GM10248 (cell line): ENCODE measurements at regions of chr15 and their contacts with region 1.

Region 1: DNA sequence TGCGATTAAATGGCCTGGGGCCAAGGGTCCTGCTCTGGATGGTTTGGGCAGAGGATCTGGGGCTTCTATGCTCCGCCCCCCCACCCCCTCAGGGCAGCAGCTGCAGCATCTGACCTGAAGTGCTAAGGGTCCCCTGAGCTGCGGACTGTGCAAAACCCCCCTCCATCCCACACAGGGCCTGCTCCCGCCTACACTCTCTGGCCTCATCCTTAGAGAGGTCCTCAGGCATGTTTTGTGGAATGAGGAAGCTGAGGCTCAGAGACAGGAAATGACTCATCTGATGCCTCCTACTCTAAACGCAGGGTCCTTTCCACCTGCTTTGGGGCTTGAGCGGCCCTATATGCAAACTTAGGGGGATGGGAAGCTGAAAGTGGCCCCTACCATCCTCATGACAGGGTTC is 59.5 kb upstream of the CTSH start:
- DNase-seq: peak; percentile 85
- CTCF ChIP-seq: no peak

Region 2: GRCh38 chr15:78909791-78910228 is 94.5 kb before region 1 on chr15:
- CTCF ChIA-PET with region 1: interaction called, 23 read pairs
- POLR2A ChIA-PET with region 1: interaction called, 3 read pairs
- DNase-seq: peak; percentile 51
- CTCF ChIP-seq: peak; percentile 64

Region 3: GRCh38 chr15:78979456-78980320 is 24.6 kb before region 1 on chr15:
- CTCF ChIA-PET with region 1: interaction called, 49 read pairs
- POLR2A ChIA-PET with region 1: no interaction called
- DNase-seq: peak; percentile 64
- CTCF ChIP-seq: peak; percentile 57

Region 4: DNA sequence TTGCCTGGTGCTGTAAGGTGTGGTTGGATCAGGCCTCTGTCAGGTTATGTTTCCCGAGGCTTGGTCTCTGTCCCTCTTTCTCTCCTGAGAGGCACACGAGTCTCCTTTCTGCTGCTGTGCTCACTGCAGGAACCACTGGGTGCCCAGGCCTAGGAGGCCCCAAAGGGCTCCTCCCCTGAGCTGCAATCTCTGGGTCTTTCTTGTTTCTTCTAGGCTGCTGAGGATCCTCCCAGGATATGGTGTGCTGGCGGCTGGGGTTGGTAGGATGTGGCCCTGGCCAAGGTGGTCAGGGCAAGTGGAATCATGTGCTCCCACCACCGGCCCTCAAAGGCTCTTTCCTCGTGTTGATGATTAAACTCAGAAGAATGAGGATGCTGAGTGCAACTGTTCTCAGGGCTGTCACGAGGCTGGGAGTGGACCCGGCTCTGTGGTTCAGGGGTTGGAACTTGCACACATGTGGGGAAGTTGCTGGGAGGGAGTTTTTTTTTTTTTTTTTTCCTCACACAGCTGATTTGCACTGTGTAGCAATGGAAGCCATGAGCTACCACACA is 15.9 kb before region 1 on chr15:
- CTCF ChIA-PET with region 1: interaction called, 21 read pairs
- POLR2A ChIA-PET with region 1: interaction called, 3 read pairs
- DNase-seq: peak; percentile 47
- CTCF ChIP-seq: no peak

Region 5: DNA sequence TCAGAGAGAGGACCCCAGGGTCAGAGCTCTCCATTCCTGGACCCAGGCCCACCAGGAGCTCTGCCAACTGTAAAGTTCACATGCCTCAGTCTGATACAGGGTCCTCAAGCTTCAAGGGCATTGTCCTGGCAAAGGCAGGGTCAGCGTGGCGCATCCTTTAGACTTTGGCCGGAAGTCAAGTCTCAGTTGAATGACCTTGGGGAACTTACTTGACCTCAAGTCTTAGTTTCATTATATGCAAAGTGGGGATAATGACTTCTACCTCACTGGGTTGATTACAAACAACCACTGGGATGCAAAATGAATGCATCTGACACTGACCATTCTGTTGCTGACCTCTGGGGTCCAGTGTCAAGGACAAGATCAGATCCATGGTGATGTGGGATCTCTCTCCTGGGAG is 11.1 kb after region 1 on chr15:
- CTCF ChIA-PET with region 1: interaction called, 25 read pairs
- POLR2A ChIA-PET with region 1: no interaction called
- DNase-seq: no peak
- CTCF ChIP-seq: no peak

Region 6: DNA sequence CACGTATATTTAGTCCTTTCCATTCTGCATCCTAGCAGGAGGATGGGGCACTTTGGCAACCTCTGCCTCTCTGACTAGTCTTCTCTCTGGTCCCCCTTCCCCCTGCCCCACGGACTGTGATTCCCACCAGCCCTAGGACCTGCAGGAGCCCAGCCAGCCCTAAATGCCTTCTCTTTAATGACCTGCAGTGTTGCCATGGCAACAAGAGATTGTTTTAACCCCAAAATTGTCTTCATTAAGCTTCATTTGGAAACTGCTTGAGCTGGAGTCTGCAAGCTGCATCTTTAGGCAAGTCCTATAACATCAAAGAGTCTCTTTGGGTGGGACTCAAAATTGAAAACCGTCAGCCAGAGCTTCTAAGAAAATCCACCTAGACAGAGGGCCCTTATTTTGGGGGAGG is 218.5 kb after region 1 on chr15:
- CTCF ChIA-PET with region 1: no interaction called
- POLR2A ChIA-PET with region 1: no interaction called
- DNase-seq: no peak
- CTCF ChIP-seq: no peak

Region 7: GRCh38 chr15:79427781-79428598 is 423.7 kb after region 1 on chr15:
- CTCF ChIA-PET with region 1: no interaction called
- POLR2A ChIA-PET with region 1: no interaction called
- DNase-seq: no peak
- CTCF ChIP-seq: no peak